Right cardiac atrium (tissue), 5 donors: ENCODE measurements at regions of chr16 and their contacts with region 1.

Region 1: GRCh38 chr16:11255737-11256660 is at the start of gene SOCS1:
- DNase-seq: peak; percentile 84 to 93 (median 93)
- ATAC-seq: peak; percentile 81 to 86
- H3K4me3 ChIP-seq: peak within 1 kb of the TSS; percentile 95
- H3K27ac ChIP-seq: peak within 1 kb of the TSS; percentile 96
- H3K4me1 ChIP-seq: peaks cover 10% of the 10 kb centered on the region
- H3K27me3 ChIP-seq: no peaks in the 10 kb centered on the region
- total RNA-seq, gene SOCS1: 0.96 to 5.5 (median 2.2) TPM

Region 2: GRCh38 chr16:10971560-10971961 is 284.4 kb before region 1 on chr16:
- intact Hi-C with region 1: loop called (anchors 2 to 5 kb)
- DNase-seq: peak in 1 of 3 donors; percentile 32
- ATAC-seq: peak; percentile 61 to 68
- H3K4me3 ChIP-seq: no peak overlapping the region
- H3K27ac ChIP-seq: no peak overlapping the region
- H3K4me1 ChIP-seq: peaks cover 3% of the 10 kb centered on the region
- H3K27me3 ChIP-seq: no peaks in the 10 kb centered on the region

Region 3: DNA sequence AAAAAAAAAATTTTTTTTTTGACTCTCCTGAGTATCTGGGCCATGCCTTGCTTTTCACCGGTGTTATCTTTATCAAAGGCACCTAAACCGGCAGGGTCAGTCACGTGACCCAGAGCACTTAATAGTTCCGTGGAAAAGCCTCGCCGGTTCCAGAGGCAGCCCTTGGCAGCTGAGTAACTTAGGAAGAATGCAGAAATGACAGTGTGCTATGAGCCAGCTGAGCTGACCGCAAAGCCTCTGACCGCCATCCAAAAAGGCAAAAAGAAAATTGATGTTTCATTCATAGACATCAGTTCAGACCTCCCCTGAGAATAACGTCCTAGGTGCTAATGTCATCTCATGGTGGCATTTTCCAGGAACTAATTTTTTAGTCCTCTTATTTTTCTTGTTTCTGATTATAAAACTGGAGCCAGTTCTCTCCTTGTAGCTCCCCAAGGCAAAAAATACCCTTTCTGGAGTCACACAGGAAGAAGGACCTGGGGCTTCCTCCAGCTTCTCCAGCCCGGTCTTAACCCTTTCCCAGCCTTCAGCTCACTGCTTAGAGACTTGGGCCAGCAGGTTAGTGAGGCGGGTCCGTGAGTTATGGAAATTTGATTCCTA is 122.6 kb before region 1 on chr16:
- intact Hi-C with region 1: loop called in 1 of 4 experiments (anchors 10 kb)
- DNase-seq: peak; percentile 82 to 91 (median 86)
- ATAC-seq: peak; percentile 59 to 69
- H3K4me3 ChIP-seq: no peak overlapping the region
- H3K27ac ChIP-seq: peak overlapping the region; percentile 80
- H3K4me1 ChIP-seq: peaks cover 29% of the 10 kb centered on the region
- H3K27me3 ChIP-seq: no peaks in the 10 kb centered on the region

Region 4: DNA sequence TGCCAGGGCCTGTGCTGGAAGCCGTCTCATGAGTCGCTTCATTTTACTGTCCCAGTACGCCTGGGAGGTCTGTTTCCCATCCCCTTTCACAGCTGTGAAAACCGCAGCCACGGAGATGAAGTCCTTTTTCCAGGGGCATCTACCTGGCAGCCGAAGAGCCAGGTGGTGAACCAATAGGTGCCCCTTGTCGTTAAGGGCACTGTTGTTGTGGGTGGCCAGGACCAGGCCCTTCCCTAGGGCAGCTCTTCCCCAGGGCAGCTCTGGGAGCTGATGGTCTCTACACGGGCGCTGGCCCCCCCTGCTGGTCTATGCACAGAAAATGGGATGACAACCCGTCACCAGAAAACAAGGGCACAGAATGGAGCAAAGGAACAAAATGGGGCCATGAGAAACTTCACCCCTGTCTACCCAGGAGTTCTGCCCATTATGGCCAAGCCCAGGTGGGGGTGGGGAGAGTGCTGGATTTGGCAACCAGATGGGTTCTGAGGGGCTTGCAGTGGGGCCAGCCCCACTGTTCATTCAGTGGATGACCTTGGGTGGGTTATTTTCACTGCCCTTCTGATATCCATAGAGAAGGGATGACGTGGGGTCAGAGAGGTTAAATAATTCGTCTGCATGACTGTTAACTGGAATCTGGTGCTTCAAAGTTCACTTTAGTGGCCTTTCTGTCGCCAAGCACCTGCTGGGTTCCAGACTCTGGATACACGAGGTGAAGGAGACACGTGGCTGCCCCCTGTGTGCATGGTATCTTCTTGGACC is 100.8 kb after region 1 on chr16:
- intact Hi-C with region 1: loop called in 1 of 4 experiments (anchors 5 kb)
- DNase-seq: peak; percentile 64 to 89 (median 84)
- ATAC-seq: peak; percentile 61 to 64
- H3K4me3 ChIP-seq: no peak overlapping the region
- H3K27ac ChIP-seq: peak overlapping the region; percentile 79
- H3K4me1 ChIP-seq: peaks cover 6% of the 10 kb centered on the region
- H3K27me3 ChIP-seq: no peaks in the 10 kb centered on the region